Activated B cell treated with CpG ODN at 0.5 μM for 24 hours (primary cell): ENCODE measurements at regions of chr11 and their contacts with region 1.

Region 1: DNA sequence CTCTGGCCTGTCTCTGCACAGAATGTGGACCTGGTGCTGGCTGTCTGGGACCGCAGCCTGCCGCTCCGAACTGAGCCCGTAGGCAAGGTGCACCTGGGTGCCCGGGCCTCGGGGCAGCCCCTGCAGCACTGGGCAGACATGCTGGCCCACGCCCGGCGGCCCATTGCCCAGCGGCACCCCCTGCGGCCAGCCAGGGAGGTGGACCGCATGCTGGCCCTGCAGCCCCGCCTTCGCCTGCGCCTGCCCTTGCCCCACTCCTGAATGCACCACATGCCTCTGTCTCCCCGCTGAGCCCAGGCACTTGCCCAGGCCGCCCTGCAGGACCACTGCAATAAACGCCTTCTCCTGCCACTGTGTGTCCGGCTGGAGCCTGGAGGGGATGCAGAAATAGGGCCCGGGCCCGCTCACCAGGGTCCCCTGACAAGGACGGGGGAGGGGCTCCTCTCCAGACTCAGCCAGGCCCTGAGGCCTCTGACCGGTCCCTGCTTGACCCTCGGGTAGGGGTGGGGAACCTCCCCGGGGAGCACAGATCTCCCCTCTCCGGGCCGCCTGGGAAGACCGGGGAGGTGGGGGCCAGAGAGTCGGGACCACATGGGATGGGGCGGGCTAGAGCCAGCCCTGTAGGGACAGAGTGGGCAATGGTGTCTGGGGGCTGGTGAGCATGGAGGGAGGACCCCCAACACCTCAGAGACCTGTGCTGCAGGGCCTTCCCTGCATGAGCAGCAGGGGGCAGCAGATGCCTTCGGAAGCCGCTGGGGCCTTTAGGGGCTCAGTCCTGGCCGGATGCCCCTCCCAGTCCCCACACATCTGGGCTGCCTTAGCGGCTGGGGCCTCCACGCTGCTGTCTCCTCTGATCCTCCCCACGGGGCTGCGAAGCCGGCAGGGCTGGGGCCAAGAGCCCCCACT is 1.4 kb upstream of the TNNI2 start:
- DNase-seq: peak; percentile 76
- ATAC-seq: peak; percentile 80
- H3K4me3 Mint-ChIP-seq: no peak overlapping the region
- H3K27ac Mint-ChIP-seq: no peak overlapping the region
- H3K4me1 Mint-ChIP-seq: peaks cover 29% of the 10 kb centered on the region
- H3K27me3 Mint-ChIP-seq: peaks cover 3% of the 10 kb centered on the region
- CTCF ChIP-seq: peak; percentile 83

Region 2: DNA sequence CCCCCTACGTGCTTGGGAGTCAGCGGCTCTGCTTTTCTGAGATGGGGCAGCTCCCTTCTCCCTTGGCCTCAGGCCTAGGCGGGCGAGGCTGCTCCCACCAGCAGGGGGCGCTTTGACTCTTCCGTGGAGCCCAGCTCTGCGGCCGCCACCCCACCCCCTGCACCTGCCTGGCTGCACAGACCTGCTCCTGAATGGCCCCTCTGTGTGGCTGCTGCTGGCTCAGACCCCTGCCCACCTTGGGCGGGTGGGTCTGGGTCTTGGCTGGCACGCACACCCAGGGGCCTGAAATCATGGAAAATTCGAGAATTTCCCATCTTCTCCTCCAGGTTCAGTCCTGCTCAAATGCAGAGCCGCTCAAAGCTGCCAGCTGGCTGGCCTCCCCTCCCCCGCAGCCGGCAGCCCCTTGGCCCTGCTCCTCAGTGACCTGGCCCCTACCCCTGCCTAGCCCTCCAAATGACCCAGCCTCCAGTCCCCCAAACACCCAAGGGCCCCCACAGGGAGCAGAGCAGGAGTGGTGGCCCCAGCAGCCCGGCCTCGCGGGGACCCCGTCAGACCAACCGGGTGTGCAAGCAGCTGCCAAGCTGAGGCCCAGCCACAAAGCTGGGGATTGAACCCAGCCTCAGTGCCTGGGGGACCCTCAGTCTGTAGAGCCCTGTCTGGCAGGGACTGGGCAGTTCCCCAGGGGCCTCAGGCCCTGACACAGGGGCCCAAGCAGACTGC is 45.3 kb after region 1 on chr11:
- CTCF ChIA-PET with region 1: interaction called, 12 read pairs
- POLR2A ChIA-PET with region 1: interaction called, 3 read pairs
- intact Hi-C with region 1: loop called (anchors 1 kb)
- DNase-seq: peak; percentile 73
- ATAC-seq: peak; percentile 83
- H3K4me3 Mint-ChIP-seq: no peak overlapping the region
- H3K27ac Mint-ChIP-seq: no peak overlapping the region
- H3K4me1 Mint-ChIP-seq: peaks cover 35% of the 10 kb centered on the region
- H3K27me3 Mint-ChIP-seq: no peaks in the 10 kb centered on the region
- CTCF ChIP-seq: no peak